GM12878 (cell line): ENCODE measurements at regions of chr12 and their contacts with region 1.

Region 1: DNA sequence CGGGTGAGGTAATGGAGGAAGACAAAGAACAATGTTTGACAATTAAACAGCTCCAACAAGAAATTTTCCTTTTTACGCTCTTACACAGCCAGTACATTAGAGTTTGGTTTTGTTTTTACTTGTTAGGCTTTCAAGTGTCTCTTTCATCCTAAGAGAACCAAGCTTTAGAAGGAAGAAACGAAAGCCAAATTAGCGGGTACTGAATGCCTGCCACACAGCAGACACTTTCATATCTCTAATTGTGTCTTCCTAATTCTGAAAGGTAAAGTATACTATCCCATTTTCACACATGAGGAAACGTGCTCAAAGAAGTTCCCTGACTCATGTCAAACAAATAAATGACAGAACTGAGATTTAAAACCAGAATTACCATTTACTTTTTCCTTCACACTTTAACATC is 65.0 kb downstream of the CDK17 start:
- DNase-seq: peak; percentile 77
- ATAC-seq: peak; percentile 97
- H3K4me3 ChIP-seq: no peak overlapping the region
- H3K27ac ChIP-seq: no peak overlapping the region
- H3K4me1 ChIP-seq: peaks cover 13% of the 10 kb centered on the region; the same call in 1 of the 2 replicates
- H3K27me3 ChIP-seq: no peaks in the 10 kb centered on the region
- CTCF ChIP-seq: no peak
- EP300 ChIP-seq: peak in 1 of 2 experiments; percentile 37; a peak in 1 of 4 replicates
- POLR2A ChIP-seq: no peak
- RAD21 ChIP-seq: no peak

Region 2: DNA sequence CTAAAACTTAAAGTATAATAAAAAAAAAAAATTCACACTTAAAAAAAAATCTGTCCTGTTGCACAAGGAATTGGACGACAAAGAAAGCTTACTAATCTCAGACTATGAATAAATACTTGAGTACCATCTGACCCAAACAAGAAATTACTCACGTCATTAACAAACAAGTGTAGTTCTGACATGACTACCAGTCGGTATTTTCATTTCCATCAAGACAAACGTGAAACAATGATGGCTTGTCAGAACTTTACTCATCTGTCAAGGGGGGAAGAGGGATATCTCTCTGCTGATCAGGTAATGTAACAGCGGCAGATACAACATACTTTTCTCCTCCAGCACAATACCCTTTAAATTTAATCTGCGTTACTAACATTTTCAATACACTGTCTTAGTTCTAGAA is 13.3 kb before region 1 on chr12:
- CTCF ChIA-PET with region 1: interaction called, 3 read pairs
- POLR2A ChIA-PET with region 1: interaction called, 4 read pairs
- RAD21 ChIA-PET with region 1: interaction called, 3 read pairs
- SMC1A ChIA-PET with region 1: interaction called, 12 read pairs
- in situ Hi-C with region 1: no loop called
- intact Hi-C with region 1: no loop called
- DNase-seq: no peak
- ATAC-seq: no peak
- H3K4me3 ChIP-seq: no peak overlapping the region
- H3K27ac ChIP-seq: no peak overlapping the region
- H3K4me1 ChIP-seq: peaks cover 10% of the 10 kb centered on the region
- H3K27me3 ChIP-seq: no peaks in the 10 kb centered on the region
- CTCF ChIP-seq: no peak
- EP300 ChIP-seq: no peak
- POLR2A ChIP-seq: no peak
- RAD21 ChIP-seq: no peak

Region 3: GRCh38 chr12:96412431-96412830 is 77.2 kb after region 1 on chr12:
- CTCF ChIA-PET with region 1: no interaction called
- POLR2A ChIA-PET with region 1: no interaction called
- RAD21 ChIA-PET with region 1: no interaction called
- SMC1A ChIA-PET with region 1: no interaction called
- in situ Hi-C with region 1: no loop called
- intact Hi-C with region 1: no loop called
- DNase-seq: no peak
- ATAC-seq: no peak
- H3K4me3 ChIP-seq: no peak overlapping the region
- H3K27ac ChIP-seq: no peak overlapping the region
- H3K4me1 ChIP-seq: peaks cover 6% of the 10 kb centered on the region
- H3K27me3 ChIP-seq: no peaks in the 10 kb centered on the region
- CTCF ChIP-seq: no peak
- EP300 ChIP-seq: no peak
- POLR2A ChIP-seq: no peak
- RAD21 ChIP-seq: no peak

Region 4: GRCh38 chr12:96436366-96437170 is 101.3 kb after region 1 on chr12:
- CTCF ChIA-PET with region 1: no interaction called
- POLR2A ChIA-PET with region 1: no interaction called
- RAD21 ChIA-PET with region 1: no interaction called
- SMC1A ChIA-PET with region 1: no interaction called
- in situ Hi-C with region 1: no loop called
- intact Hi-C with region 1: no loop called
- DNase-seq: no peak
- ATAC-seq: no peak
- H3K4me3 ChIP-seq: no peak overlapping the region
- H3K27ac ChIP-seq: no peak overlapping the region
- H3K4me1 ChIP-seq: peaks cover 4% of the 10 kb centered on the region; the same call in 1 of the 2 replicates
- H3K27me3 ChIP-seq: no peaks in the 10 kb centered on the region
- CTCF ChIP-seq: no peak
- EP300 ChIP-seq: no peak
- POLR2A ChIP-seq: no peak
- RAD21 ChIP-seq: no peak

Region 5: GRCh38 chr12:96489103-96490056 is 154.1 kb after region 1 on chr12 and contains the start of gene CFAP54:
- CTCF ChIA-PET with region 1: no interaction called
- POLR2A ChIA-PET with region 1: no interaction called
- RAD21 ChIA-PET with region 1: no interaction called
- SMC1A ChIA-PET with region 1: no interaction called
- in situ Hi-C with region 1: no loop called
- intact Hi-C with region 1: loop called (anchors 5 kb)
- DNase-seq: peak; percentile 65
- ATAC-seq: peak; percentile 91
- H3K4me3 ChIP-seq: peak within 1 kb of the TSS; percentile 73
- H3K27ac ChIP-seq: no peak within 1 kb of the TSS
- H3K4me1 ChIP-seq: peaks cover 14% of the 10 kb centered on the region
- H3K27me3 ChIP-seq: no peaks in the 10 kb centered on the region
- CTCF ChIP-seq: peak; percentile 88 to 98 (median 91)
- EP300 ChIP-seq: peak; percentile 12 to 40; a peak in 2 of 4 replicates
- POLR2A ChIP-seq: no peak
- RAD21 ChIP-seq: peak; percentile 80
- polyA plus RNA-seq, gene CFAP54: 0.19 to 0.55 TPM

Region 6: DNA sequence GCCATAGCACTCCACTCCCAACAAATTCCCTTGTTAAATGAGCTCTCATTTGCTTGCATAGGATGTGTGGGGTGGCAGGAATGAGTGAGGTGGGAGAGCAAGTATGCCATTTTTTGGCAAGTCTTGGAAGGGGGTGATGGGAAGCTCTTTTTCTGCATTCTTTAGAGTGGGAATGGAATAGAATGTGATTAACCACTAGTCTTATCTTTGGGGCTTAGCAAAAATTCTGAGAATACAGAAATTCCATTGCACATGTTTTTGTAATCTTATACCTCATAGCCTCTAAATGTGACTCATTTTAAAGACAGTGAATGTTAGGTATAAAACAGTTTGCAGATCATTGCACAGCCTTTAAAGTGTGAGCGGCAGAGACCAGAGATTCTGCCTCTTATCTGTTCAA is 543.4 kb after region 1 on chr12:
- CTCF ChIA-PET with region 1: no interaction called
- POLR2A ChIA-PET with region 1: no interaction called
- RAD21 ChIA-PET with region 1: no interaction called
- SMC1A ChIA-PET with region 1: no interaction called
- in situ Hi-C with region 1: no loop called
- intact Hi-C with region 1: no loop called
- DNase-seq: no peak
- ATAC-seq: no peak
- H3K4me3 ChIP-seq: no peak overlapping the region
- H3K27ac ChIP-seq: no peak overlapping the region
- H3K4me1 ChIP-seq: no peaks in the 10 kb centered on the region
- H3K27me3 ChIP-seq: peaks cover 0 to 2% of the 10 kb centered on the region in 2 experiments; a peak in 1 of 4 replicates
- CTCF ChIP-seq: no peak
- EP300 ChIP-seq: no peak
- POLR2A ChIP-seq: no peak
- RAD21 ChIP-seq: no peak